Posterior cingulate gyrus (tissue), 11 donors: ENCODE measurements at regions of chr7 and their contacts with region 1.

Region 1: DNA sequence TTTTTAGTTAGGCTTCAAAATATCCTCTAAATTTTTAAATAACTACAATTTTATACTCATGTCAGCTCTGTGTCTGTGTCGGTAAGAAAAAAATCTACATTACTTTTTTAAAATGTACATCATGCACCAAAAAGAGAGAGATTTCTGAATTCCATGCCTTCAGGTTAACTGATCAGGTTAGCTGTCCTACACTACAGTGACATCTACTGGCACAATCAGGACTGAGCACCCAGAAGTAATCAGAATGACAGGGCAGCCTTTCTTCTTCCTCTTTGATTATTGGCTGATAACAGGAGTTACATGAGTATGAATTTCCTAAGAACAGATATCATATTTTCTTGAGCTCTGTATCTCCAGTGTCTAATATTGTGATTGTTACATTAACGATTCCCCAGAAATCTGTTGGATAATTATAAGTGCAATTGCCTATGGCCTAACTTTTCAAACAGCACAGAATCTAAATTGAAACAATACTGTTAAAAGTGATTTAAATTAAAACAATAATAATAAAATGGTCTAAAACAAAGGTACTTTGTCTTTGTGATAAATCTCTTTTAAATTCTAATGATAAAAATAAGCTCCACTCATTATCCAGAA is 41.8 kb upstream of the HYCC1 start:
- DNase-seq: peak in 4 of 10 donors; percentile 45 to 59 (median 52)

Region 2: DNA sequence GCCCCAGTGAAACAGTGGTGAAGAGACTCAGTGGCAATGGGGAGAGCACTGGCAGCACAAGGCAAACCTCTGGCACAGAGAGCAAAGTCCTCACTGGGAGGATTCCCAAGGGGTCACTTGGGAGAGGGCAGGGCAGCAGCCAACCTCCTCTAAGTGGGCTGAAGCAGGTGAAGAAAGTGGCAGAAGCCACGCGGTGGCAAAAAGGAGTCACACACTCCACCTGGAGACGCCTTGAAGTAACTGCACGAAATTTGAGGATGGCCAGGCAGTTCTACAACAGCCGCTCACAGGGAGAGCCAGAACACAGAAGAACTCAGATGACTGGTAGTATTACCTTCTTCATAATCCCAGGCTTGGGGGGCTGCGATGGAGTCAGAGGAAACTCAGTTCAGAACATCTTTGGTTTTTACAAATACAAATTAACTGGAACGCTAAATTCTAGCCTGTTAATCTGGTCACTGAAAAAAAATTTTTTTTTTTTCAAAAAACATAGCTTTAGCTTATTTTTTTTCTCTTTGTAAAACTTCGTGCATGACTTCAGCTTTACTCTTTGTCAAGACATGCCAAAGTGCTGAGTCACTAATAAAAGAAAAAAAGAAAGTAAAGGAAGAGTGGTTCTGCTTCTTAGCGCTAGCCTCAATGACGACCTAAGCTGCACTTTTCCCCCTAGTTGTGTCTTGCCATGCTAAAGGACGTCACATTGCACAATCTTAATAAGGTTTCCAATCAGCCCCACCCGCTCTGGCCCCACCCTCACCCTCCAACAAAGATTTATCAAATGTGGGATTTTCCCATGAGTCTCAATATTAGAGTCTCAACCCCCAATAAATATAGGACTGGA is 329.1 kb before region 1 on chr7:
- intact Hi-C with region 1: loop called (anchors 10 kb)
- DNase-seq: peak in 6 of 10 donors; percentile 13 to 89 (median 36)

Region 3: GRCh38 chr7:22822486-22823141 is 233.1 kb before region 1 on chr7 and contains the start of gene TOMM7:
- intact Hi-C with region 1: loop called (anchors 2 kb)
- DNase-seq: peak; percentile 82 to 98 (median 88)

Region 4: DNA sequence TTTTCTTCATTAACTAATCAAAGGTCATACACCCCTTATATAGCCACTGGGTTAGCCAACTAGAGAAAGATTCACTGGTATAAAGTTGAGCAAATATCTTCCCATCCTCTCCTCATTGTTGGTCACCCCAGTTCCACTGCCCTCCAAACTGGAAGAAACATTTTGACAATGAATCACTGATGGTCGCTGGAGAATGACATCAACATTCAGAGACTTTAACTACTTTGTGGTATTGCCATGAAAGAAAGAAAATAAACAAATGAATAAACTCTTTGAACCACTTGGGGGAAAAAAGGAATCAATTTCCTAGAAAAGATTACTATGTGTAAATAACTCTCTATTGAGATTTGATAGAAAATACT is 65.1 kb before region 1 on chr7:
- intact Hi-C with region 1: no loop called
- DNase-seq: no peak

Region 5: DNA sequence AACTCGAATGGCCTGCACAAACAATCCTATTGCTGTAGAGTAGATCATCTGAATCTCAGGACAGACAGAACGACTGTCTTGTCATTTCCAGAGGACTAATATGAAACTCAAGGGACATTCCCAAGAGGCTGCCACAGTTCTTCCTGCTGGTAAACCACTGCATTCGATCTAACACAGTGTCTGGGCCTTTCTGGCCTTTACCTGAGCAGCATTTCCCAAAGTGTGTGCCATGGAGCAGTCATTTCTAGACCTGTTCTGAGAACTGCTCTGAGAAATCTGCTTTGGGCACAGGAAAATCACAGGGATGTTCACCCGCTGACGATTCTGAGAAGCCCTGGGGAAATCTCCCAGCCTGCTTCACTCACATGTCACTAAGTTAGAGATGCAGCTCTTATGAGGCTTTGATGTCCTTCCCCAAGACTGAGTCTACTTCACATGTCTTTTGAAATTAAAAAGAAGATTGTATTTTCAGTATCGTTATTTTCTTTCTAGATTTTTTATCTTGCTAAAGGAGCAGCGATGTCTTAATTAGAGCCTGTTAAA is 209.3 kb after region 1 on chr7:
- intact Hi-C with region 1: no loop called
- DNase-seq: no peak